ENCODE measurements at regions of chr19 and their contacts with region 1.

Region 1: DNA sequence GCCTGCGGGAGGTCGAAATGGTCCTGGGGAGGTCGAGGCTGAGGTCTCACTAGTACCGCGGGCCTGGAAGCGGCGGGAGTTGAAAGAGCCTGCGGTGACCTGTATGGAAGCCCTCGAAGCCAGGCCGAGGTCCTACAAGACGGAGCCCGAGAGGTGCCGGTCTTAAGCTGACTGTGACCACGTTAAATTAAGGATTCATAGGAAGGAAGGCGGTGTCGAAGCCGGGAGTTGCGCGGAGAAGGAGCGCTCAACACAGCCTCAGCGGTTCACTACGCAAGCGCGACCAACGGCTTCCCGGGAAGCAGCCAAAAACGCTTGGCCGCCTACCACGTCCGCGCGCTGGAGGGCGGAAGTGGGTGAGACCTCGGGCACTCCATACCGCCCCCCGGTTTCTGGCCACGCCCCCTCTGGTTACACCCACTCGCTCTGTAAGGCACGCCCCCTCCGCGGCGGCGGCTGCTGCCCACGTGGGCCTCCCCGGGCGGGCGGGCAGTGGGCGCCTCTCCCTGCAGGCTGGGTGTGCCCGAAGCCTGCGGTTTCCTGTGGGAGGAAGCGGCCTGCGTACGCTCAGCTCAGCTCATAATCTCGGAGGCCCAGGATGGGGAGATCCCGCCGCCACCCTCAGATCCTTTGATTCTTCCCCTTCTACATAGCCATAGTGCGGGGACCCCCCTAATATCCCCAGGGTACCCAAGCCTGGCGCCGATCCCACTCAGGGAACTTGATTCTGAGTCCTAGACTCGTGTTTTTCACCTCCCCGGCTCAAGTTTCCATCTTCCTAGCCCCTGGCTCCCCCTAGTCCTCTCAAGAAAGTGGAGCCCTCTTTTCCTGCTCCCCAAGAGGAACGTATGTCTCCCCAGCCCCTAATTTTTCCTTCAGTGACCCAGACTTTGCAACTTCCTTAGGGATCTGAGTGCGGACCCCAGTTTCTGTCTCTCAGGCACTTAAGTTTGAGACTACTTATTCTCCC is 3.4 kb upstream of the EMP3 start:
- DNase-seq: peak; percentile 100
- H3K4me3 ChIP-seq: peak overlapping the region; percentile 31 to 65 (median 49)
- H3K27ac ChIP-seq: peak overlapping the region; percentile 90 to 98 (median 98)
- H3K4me1 ChIP-seq: peaks cover 0 to 49% (median 48%) of the 10 kb centered on the region in 4 donors
- H3K27me3 ChIP-seq: no peaks in the 10 kb centered on the region
- CTCF ChIP-seq: no peak
- EP300 ChIP-seq: no peak
- POLR2A ChIP-seq: peak; percentile 29 to 63

Region 2: DNA sequence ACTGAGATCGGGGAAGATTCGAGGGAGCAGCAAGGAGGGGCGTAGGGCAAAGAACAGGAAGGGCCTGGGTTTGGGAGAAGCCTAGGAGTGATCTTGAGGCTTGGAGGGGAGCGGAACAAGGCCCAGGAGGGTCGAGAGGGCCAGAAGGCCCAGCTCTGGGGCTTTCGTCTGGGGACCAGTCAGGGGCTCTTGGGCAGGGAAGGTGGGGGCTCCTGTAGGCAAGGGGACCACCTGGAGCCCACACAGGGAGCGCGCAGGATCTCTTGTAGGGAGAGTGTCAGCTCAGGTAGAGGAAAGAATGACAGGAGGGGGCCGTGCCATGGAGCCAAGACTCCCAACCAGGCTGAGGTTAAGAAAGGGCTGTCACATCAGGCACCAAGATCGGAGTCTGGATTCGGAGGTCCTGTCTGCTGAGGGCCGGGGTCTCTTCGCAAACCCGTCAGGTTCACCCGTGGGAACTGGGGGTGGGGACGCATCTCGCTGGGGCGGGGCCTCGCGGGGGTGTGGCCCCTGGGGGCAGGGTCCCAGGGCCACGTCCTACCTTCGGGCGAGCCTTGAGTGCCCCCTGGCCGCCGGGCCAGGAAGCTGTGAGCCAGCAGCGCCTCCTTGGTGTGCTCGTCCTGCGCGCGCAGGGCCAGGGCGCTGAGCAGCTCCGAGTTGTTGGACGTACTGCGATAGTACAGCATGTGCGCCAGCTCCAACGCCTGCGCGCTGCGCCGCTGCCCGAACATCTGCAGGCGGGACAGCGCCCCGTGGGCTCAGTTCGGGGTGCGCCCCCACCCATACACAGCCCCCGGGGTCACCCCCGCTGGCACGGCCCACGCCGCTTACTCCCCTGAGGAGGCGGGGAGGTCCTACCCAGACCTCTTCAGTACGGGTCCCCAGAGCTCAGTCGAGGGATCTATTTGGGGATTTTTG is 11.8 kb after region 1 on chr19:
- intact Hi-C with region 1: loop called (anchors 1 kb)
- DNase-seq: peak; percentile 97
- H3K4me3 ChIP-seq: peak overlapping the region; percentile 15 to 44 (median 40)
- H3K27ac ChIP-seq: peak overlapping the region; percentile 89 to 94 (median 94)
- H3K4me1 ChIP-seq: peaks cover 0 to 48% (median 43%) of the 10 kb centered on the region in 4 donors
- H3K27me3 ChIP-seq: no peaks in the 10 kb centered on the region
- CTCF ChIP-seq: peak in 3 of 4 experiments; percentile 51 to 89 (median 85)
- EP300 ChIP-seq: no peak
- POLR2A ChIP-seq: no peak

Region 3: DNA sequence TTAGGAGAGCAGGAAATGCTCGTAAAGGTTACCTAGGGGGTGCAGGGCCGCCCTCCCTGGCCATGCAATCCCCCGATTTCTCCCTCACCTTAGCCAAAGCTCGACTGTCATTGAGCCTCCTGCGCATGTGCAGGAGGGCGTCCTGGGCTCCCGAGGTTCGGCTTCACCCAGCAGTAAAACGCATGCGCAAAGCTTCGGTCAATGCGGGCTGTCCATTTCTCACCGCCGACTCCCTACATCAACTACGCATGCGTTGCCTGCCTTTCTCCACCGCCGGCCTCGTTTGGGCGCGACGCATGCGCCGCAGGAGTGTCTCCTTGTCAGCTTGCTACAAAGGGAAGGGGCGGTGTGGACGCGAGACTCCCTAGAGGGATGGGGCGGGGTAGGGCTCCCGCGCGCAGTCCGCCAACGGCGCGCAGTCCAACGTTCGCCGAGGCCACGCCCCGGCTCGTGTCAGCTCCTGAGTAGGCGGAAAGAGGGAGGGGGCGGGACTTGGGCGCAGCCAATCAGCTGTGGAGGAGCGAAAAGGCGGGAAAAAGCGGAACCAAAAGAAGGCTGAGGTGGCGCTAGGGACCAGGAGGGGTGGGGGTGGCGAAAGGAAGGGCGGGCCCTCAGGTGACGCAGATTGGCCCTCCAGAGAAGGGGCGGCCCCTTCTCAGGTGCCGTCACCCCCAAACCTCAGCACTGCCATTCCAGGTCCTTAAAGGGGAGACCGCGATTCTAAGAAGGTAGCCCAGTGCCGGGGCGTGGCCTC is 42.1 kb after region 1 on chr19 and contains the starts of genes SYNGR4 and TMEM143:
- intact Hi-C with region 1: loop called (anchors 1 kb)
- DNase-seq: peak; percentile 100
- H3K4me3 ChIP-seq: peak within 1 kb of the TSS; percentile 48 to 70 (median 62)
- H3K27ac ChIP-seq: peak within 1 kb of the TSS; percentile 81 to 99 (median 96)
- H3K4me1 ChIP-seq: peaks cover 0 to 12% (median 8%) of the 10 kb centered on the region in 4 donors
- H3K27me3 ChIP-seq: no peaks in the 10 kb centered on the region
- CTCF ChIP-seq: no peak
- EP300 ChIP-seq: peak in 1 of 4 donors; percentile 29
- POLR2A ChIP-seq: peak; percentile 35 to 59
- total RNA-seq, gene SYNGR4: not detected
- total RNA-seq, gene TMEM143: 5.4 to 8.9 (median 6.8) TPM

Region 4: DNA sequence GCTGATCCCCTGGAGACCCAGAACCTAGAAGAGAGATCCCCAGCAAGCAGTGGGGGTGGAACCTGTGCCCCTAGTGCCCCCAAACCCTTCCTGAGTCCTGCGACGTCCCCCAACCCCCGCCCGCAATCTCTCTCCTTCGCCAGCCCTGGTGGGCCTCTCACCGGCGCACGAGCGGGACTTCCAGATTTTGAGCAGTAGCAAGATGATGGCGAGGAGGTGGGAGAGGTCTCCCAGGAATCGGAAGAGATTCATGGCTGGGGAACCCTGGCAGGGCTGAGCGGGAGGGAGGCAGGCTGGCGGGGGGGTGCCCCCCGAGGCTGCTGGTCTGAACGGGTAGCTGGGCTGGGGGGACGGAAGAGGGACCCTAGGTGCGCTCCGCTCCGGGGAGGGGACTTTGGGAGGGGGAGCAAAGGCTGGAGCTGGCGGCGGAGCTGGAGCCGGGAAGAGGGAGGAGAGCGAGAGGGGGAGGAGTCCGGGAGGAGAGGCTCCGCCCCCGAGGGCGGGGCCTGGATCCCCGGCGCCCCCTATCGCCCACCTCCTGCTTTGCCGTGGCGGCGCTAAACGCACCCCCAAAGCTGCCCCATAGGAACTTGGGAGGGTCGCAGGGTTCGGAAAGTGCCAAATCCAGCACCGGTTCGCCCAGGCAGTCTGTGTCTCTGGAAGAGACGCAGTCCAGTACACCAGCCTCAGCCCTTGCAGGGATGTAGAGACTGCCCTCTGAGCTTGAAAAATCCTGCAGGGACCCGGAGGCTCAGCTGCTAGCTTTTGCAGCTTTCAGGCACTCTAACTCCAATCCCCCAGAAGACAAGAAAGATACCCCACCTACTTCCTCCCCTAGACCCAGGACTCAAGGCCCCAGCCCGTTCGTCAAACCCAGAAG is 69.4 kb after region 1 on chr19 and contains the start of gene KDELR1:
- intact Hi-C with region 1: loop called (anchors 2 kb)
- DNase-seq: peak; percentile 89
- H3K4me3 ChIP-seq: peak within 1 kb of the TSS; percentile 74 to 98 (median 90)
- H3K27ac ChIP-seq: peak within 1 kb of the TSS; percentile 87 to 94 (median 93)
- H3K4me1 ChIP-seq: peaks cover 0 to 36% (median 30%) of the 10 kb centered on the region in 4 donors
- H3K27me3 ChIP-seq: peaks cover 26 to 45% (median 43%) of the 10 kb centered on the region in 3 donors
- CTCF ChIP-seq: peak in 3 of 4 experiments; percentile 68 to 93 (median 75)
- EP300 ChIP-seq: no peak
- POLR2A ChIP-seq: peak; percentile 64 to 70
- total RNA-seq, gene KDELR1: 61.5 to 109 (median 71.1) TPM

Region 5: DNA sequence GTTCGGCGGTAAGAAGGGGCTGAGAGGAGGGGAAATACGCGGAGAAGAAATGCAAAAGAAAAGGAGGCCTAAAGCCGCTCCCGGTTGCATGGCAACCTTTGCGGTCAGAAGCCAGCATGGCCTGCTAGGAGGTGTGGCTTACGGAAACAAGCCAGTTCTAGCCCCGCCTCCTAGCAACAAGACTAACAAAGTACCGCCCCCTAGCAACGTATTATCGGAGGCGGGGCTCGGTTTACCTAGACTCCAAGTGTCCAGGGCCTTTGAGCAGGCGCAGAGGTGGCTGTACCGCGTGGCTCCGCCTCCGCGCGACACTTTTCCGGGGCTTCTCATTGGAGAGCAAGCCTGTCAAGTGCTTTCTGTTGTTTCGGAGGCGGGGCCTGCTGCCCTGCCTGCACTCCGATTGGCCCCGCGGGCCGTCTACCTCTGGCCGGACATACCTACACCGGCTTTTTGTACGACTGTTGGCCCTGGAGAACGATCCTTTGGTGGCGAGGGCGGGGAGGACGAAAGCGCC is 146.9 kb after region 1 on chr19:
- intact Hi-C with region 1: loop called (anchors 5 kb)
- DNase-seq: peak; percentile 100
- H3K4me3 ChIP-seq: peak overlapping the region; percentile 78 to 99 (median 94)
- H3K27ac ChIP-seq: peak overlapping the region; percentile 97 to 99 (median 98)
- H3K4me1 ChIP-seq: peaks cover 0 to 33% (median 23%) of the 10 kb centered on the region in 4 donors
- H3K27me3 ChIP-seq: no peaks in the 10 kb centered on the region
- CTCF ChIP-seq: no peak
- EP300 ChIP-seq: no peak
- POLR2A ChIP-seq: no peak

Region 6: DNA sequence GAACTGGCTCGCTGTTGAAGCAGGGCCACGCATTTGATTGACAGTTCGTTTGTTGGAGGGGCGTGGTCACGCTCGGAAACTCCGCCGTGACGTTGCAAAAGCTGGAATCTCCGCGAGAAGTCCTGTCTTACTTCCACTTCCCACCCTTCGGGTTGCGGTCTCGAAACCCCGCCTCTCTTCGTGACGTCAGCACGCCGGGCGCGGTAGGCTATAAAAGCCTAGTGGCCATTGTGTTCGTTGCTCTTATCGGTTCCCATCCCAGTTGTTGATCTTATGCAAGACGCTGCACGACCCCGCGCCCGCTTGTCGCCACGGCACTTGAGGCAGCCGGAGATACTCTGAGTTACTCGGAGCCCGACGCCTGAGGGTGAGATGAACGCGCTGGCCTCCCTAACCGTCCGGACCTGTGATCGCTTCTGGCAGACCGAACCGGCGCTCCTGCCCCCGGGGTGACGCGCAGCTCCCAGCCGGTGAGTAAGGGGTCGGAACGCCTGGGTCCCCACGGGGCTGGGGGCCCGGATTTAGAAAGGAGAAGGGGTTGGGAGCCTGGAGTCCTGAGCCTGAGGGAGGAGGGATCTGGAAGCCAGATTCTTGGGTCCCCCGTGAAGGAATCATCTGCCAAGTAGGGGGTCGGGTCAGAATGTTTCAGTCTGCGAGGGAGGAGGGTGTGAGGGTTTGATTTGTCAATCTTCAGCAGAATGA is 550.4 kb after region 1 on chr19 and contains the start of gene PPP1R15A:
- intact Hi-C with region 1: loop called (anchors 10 kb)
- DNase-seq: peak; percentile 99
- H3K4me3 ChIP-seq: peak within 1 kb of the TSS; percentile 93 to 100 (median 94)
- H3K27ac ChIP-seq: peak within 1 kb of the TSS; percentile 99 to 100 (median 100)
- H3K4me1 ChIP-seq: peaks cover 0 to 65% (median 55%) of the 10 kb centered on the region in 4 donors
- H3K27me3 ChIP-seq: no peaks in the 10 kb centered on the region
- CTCF ChIP-seq: peak in 3 of 4 experiments; percentile 20 to 37 (median 29)
- EP300 ChIP-seq: peak in 1 of 4 donors; percentile 66
- POLR2A ChIP-seq: peak; percentile 99
- total RNA-seq, gene PPP1R15A: 22.1 to 69.8 (median 31.2) TPM